HepG2 (cell line): ENCODE measurements at regions of chr16 and their contacts with region 1.

Region 1: GRCh38 chr16:57648590-57649442 is 19.3 kb upstream of the ADGRG3 start:
- DNase-seq: peak; percentile 83
- ATAC-seq: peak; percentile 81
- H3K4me3 ChIP-seq: no peak overlapping the region
- H3K27ac ChIP-seq: no peak overlapping the region
- H3K4me1 ChIP-seq: peaks cover 29% of the 10 kb centered on the region
- H3K27me3 ChIP-seq: no peaks in the 10 kb centered on the region
- CTCF ChIP-seq: peak; percentile 100
- EP300 ChIP-seq: no peak; a peak in 1 of 4 replicates
- POLR2A ChIP-seq: no peak
- RAD21 ChIP-seq: peak; percentile 100

Region 2: DNA sequence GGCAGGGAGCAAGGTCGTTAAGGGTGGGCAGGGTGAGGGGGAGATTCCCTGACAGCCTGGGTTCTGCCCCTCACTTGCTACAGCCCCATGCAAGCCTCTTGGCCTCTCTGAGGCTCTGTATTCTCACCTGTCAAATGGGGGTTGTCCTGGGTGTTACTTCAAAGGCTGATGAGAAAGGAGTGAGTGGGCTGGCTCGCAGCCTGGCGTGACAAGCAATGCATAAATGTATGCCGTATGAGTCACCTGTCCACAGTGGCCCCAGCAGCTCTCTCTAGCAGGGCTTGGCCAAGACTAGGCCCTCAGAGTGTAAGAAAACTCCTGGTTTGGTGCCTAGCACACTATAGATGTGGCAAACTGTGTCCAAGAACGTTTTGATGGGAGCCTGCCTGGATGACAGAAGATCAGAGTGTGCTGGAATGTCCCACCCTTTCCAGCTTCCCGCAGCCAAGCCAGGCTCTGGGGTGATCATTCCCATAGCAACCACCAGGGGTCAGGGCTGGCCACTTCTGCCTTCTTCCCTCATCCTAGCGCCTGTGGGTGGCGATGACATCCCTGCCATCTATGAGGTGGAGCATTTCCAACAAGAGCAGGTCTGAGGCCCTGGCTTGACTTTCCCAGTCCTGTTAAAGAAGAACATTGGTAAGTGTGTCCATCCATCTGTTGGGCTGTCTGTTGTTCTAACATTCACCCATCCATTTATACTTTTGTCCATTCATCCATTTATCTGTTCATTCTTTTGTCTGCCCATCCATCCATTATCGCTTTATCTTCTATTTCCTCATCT is 57.5 kb before region 1 on chr16:
- CTCF ChIA-PET with region 1: interaction called, 571 read pairs
- POLR2A ChIA-PET with region 1: no interaction called
- in situ Hi-C with region 1: no loop called
- intact Hi-C with region 1: loop called (anchors 1 kb)
- DNase-seq: peak; percentile 80
- ATAC-seq: peak; percentile 99
- H3K4me3 ChIP-seq: no peak overlapping the region
- H3K27ac ChIP-seq: no peak overlapping the region
- H3K4me1 ChIP-seq: peaks cover 9% of the 10 kb centered on the region; the same call in 1 of the 2 replicates
- H3K27me3 ChIP-seq: no peaks in the 10 kb centered on the region; a peak in 1 of 5 replicates
- CTCF ChIP-seq: peak; percentile 97
- EP300 ChIP-seq: no peak
- POLR2A ChIP-seq: no peak
- RAD21 ChIP-seq: peak; percentile 91

Region 3: GRCh38 chr16:57609541-57610401 is 39.0 kb before region 1 on chr16:
- CTCF ChIA-PET with region 1: interaction called, 37 read pairs
- POLR2A ChIA-PET with region 1: interaction called, 8 read pairs
- in situ Hi-C with region 1: loop called (anchors 5 kb)
- intact Hi-C with region 1: no loop called
- DNase-seq: no peak
- ATAC-seq: no peak
- H3K4me3 ChIP-seq: no peak overlapping the region
- H3K27ac ChIP-seq: no peak overlapping the region
- H3K4me1 ChIP-seq: peaks cover 57% of the 10 kb centered on the region
- H3K27me3 ChIP-seq: peaks cover 4 to 27% of the 10 kb centered on the region in 2 experiments; a peak in 3 of 5 replicates
- CTCF ChIP-seq: peak; percentile 43; the same call in 1 of the 2 replicates
- EP300 ChIP-seq: no peak
- POLR2A ChIP-seq: no peak
- RAD21 ChIP-seq: no peak

Region 4: DNA sequence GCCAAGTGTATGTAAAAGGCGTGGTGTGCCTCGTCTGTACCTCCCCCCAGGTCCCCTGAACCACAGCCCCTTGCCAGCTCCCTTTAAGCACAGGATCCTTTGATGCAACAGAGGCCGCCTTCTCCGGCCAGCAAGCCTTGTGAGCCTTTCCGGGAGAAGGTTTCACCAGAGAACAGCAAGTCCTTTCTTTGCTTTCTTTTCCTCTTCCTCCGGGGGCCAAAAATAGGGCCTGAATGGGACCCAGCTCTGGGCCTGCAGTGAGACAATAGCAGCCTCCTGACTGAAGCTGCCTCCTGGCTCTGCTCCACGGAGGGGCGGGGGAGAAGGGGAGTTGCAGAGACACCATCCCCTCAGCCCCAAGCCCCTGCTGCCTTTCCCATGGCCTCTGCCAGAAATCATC is 11.4 kb before region 1 on chr16:
- CTCF ChIA-PET with region 1: interaction called, 9 read pairs
- POLR2A ChIA-PET with region 1: interaction called, 22 read pairs
- in situ Hi-C with region 1: no loop called
- intact Hi-C with region 1: no loop called
- DNase-seq: no peak
- ATAC-seq: no peak
- H3K4me3 ChIP-seq: no peak overlapping the region
- H3K27ac ChIP-seq: no peak overlapping the region
- H3K4me1 ChIP-seq: peaks cover 81% of the 10 kb centered on the region
- H3K27me3 ChIP-seq: no peaks in the 10 kb centered on the region
- CTCF ChIP-seq: no peak
- EP300 ChIP-seq: no peak
- POLR2A ChIP-seq: no peak
- RAD21 ChIP-seq: no peak

Region 5: DNA sequence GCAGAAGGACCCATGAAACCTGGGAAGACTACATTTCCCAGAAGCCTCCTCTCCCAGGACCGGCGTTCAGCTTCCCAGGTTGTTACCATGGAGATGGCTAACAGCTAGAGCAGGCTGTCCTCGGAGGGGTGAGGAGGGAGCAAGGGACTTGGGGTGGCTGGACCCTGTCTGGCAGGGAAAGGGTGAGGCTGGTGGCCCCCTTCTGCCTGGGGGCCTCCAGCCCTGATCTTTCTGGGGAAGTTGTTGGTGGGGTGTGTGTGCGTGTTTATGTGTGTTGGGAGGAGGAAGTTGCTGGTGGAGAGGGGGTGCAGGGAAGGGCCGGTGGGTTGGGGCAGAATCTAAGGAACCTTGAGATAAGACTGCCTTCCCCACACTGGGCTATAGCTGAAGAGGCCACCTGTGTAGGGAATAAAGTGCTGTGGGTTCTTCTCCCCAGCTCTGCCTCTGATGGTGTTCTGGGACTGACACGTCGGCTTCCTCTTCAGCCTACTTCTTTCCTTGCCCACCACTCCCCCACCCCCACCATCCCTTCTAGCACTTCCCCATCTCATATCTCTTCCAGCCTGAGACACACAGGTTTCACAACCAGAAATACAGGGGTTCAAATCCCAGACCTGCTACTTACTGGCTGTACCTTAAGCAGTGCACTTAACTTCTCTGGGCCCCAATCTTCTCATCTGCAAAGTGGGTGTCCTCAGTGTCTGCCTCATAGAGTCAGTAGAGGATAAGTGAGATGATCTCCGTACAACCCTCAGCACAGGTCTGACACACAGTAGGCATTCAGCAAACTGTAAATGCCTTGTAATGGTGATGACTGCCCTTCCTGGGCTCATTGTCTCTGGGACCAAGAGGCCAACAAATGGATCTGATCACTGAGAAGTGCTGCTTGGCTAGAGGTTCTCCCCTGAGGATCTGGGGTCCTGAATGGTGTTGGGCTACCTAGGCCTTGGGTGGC is 46.2 kb after region 1 on chr16 and contains the start of gene DRC7:
- CTCF ChIA-PET with region 1: no interaction called
- POLR2A ChIA-PET with region 1: no interaction called
- in situ Hi-C with region 1: no loop called
- intact Hi-C with region 1: loop called (anchors 1 kb)
- DNase-seq: peak; percentile 86
- ATAC-seq: peak; percentile 92
- H3K4me3 ChIP-seq: peak within 1 kb of the TSS; percentile 30 to 54 (median 42)
- H3K27ac ChIP-seq: peak within 1 kb of the TSS; percentile 59
- H3K4me1 ChIP-seq: peaks cover 81% of the 10 kb centered on the region
- H3K27me3 ChIP-seq: no peaks in the 10 kb centered on the region
- CTCF ChIP-seq: no peak
- EP300 ChIP-seq: no peak
- POLR2A ChIP-seq: no peak
- RAD21 ChIP-seq: peak; percentile 20; the same call in 1 of the 2 replicates
- total RNA-seq, gene DRC7: 2.7 and 3.4 TPM in 2 replicates